ENCODE measurements at regions of chr16 and their contacts with region 1.

Region 1: DNA sequence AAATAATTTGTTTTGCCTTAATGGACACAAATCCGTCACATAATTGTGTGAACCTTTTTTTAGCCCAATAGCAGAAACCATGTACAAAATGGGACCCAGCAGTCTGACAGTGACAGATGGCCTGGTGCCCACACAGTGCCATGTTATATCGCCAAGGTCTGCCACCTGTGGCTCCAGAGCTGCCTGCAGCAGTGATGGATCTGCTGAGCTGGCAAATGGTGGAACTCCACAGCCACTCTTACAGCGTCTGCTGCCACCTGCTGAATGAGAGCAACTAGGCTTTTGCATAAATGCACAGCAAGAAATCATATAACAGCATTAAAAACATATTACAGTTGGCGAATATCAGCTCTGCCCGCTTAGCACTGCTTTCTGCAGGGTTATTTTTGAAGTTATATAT is 59.4 kb downstream of the NUP93 start:
- DNase-seq: peak; percentile 68
- H3K4me3 Mint-ChIP-seq: no peak overlapping the region
- H3K27ac Mint-ChIP-seq: no peak overlapping the region
- H3K4me1 Mint-ChIP-seq: no peaks in the 10 kb centered on the region
- H3K27me3 Mint-ChIP-seq: no peaks in the 10 kb centered on the region
- CTCF ChIP-seq: peak; percentile 49

Region 2: DNA sequence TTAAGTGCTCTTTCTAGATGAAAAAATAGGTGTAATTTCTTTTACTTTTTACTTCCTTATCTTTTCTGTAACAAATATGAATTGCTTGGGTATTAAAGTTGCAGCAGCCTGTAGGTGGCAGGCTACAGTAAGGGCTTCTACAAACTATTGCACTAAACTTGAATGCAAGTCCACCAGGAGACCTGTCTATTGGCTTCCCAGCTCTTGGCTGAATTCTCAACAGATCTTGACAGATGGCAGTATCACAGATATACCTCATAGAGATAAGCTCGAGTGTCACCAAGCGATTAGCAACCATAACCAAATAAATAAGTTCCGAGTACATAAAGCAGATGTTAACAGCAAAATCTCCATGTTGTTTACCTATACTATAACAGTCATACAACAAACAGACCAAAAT is 275.4 kb before region 1 on chr16:
- CTCF ChIA-PET with region 1: interaction called, 7 read pairs
- POLR2A ChIA-PET with region 1: no interaction called
- intact Hi-C with region 1: loop called (anchors 1 kb)
- DNase-seq: peak; percentile 67
- H3K4me3 Mint-ChIP-seq: no peak overlapping the region
- H3K27ac Mint-ChIP-seq: no peak overlapping the region
- H3K4me1 Mint-ChIP-seq: peaks cover 21% of the 10 kb centered on the region
- H3K27me3 Mint-ChIP-seq: no peaks in the 10 kb centered on the region
- CTCF ChIP-seq: peak; percentile 50

Region 3: GRCh38 chr16:56525236-56525635 is 264.1 kb before region 1 on chr16:
- CTCF ChIA-PET with region 1: no interaction called
- POLR2A ChIA-PET with region 1: no interaction called
- intact Hi-C with region 1: no loop called
- DNase-seq: no peak
- H3K4me3 Mint-ChIP-seq: no peak overlapping the region
- H3K27ac Mint-ChIP-seq: no peak overlapping the region
- H3K4me1 Mint-ChIP-seq: peaks cover 13% of the 10 kb centered on the region
- H3K27me3 Mint-ChIP-seq: no peaks in the 10 kb centered on the region
- CTCF ChIP-seq: no peak

Region 4: GRCh38 chr16:56729735-56730662 is 59.4 kb before region 1 on chr16 and contains the start of gene NUP93:
- CTCF ChIA-PET with region 1: interaction called, 9 read pairs
- POLR2A ChIA-PET with region 1: interaction called, 4 read pairs
- intact Hi-C with region 1: loop called (anchors 5 kb)
- DNase-seq: peak; percentile 96
- H3K4me3 Mint-ChIP-seq: no peak within 1 kb of the TSS
- H3K27ac Mint-ChIP-seq: peak within 1 kb of the TSS; percentile 92
- H3K4me1 Mint-ChIP-seq: peaks cover 17% of the 10 kb centered on the region
- H3K27me3 Mint-ChIP-seq: no peaks in the 10 kb centered on the region
- CTCF ChIP-seq: no peak
- total RNA-seq, gene NUP93: 53.9 and 60.2 TPM in 2 replicates

Region 5: DNA sequence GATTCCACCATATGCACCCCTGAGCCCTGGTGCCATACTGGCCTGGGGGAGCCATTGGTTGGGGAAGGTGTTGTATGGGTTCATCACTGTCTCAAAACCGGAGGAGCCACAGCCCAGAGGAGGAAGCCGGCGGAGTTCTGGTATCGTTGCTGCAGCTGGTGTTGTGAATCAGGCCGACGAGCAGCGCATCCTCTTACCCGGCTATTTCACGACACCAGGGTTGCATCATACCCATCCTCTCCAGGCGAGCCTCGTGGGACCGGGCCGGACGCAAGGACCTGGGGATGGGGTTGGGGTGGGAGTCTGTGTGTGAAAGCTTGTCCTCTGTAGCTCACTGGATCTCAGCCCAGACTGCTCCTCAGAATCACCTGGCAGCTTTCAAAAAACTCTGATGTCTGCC is 69.0 kb after region 1 on chr16:
- CTCF ChIA-PET with region 1: interaction called, 3 read pairs
- POLR2A ChIA-PET with region 1: no interaction called
- intact Hi-C with region 1: loop called (anchors 5 kb)
- DNase-seq: no peak
- H3K4me3 Mint-ChIP-seq: no peak overlapping the region
- H3K27ac Mint-ChIP-seq: no peak overlapping the region
- H3K4me1 Mint-ChIP-seq: peaks cover 6% of the 10 kb centered on the region
- H3K27me3 Mint-ChIP-seq: no peaks in the 10 kb centered on the region
- CTCF ChIP-seq: no peak

Region 6: DNA sequence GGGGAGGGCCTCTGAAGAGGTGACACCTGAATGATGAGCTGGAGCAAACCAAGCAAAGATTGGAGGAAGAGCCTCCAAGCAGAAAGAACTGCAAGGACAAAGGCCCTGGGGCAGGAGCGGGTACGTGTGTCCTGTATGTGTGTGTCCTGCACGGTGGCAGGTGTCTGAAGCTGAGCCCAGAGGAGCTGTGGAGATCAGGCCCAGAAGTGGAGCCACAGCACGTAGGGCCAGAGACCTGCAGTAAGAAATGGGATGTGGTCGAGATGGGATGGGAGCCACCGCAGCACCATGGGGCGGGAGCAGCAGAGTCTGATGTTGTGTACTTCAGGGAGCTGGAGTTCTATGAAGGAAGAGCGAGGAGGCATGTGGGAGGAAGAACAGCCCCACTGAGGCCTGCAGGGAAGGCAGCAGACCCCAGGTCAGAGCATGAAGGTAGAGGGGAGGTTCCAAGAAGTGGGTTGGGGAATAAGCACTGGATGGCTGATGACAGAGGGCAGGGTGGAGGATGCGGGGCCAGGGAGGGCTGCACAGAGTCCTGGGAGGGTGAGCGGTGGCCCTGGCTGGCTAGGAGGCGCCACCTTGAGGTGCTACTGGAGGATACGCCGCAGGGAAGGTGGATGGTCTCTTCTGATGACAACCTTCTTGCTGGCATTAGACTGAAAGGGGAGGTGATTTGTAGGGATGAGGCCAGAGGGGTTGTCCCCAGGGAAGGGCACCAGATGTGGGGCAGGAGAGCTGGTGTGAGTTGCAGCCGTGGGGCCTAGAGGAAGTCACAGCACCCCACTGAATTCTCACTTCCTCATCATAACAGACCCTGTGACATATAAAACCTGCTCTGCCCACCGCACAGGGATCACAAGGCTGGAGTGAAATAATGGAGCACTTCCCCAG is 161.8 kb after region 1 on chr16:
- CTCF ChIA-PET with region 1: no interaction called
- POLR2A ChIA-PET with region 1: no interaction called
- intact Hi-C with region 1: loop called (anchors 1 kb)
- DNase-seq: peak; percentile 43
- H3K4me3 Mint-ChIP-seq: no peak overlapping the region
- H3K27ac Mint-ChIP-seq: no peak overlapping the region
- H3K4me1 Mint-ChIP-seq: no peaks in the 10 kb centered on the region
- H3K27me3 Mint-ChIP-seq: no peaks in the 10 kb centered on the region
- CTCF ChIP-seq: peak; percentile 27

Region 7: GRCh38 chr16:56961386-56961785 is 172.0 kb after region 1 on chr16:
- CTCF ChIA-PET with region 1: no interaction called
- POLR2A ChIA-PET with region 1: no interaction called
- intact Hi-C with region 1: no loop called
- DNase-seq: no peak
- H3K4me3 Mint-ChIP-seq: no peak overlapping the region
- H3K27ac Mint-ChIP-seq: no peak overlapping the region
- H3K4me1 Mint-ChIP-seq: peaks cover 5% of the 10 kb centered on the region
- H3K27me3 Mint-ChIP-seq: no peaks in the 10 kb centered on the region
- CTCF ChIP-seq: no peak